ENCODE measurements at regions of chr2 and their contacts with region 1.

Region 1: GRCh38 chr2:168961450-168962229 is 60.5 kb downstream of the G6PC2 start:
- DNase-seq: no peak
- ATAC-seq: peak; percentile 73
- H3K4me3 Mint-ChIP-seq: no peak overlapping the region
- H3K27ac Mint-ChIP-seq: no peak overlapping the region
- H3K4me1 Mint-ChIP-seq: no peaks in the 10 kb centered on the region
- H3K27me3 Mint-ChIP-seq: no peaks in the 10 kb centered on the region
- CTCF ChIP-seq: no peak

Region 2: GRCh38 chr2:168671932-168672331 is 289.7 kb before region 1 on chr2:
- CTCF ChIA-PET with region 1: no interaction called
- POLR2A ChIA-PET with region 1: no interaction called
- intact Hi-C with region 1: no loop called
- DNase-seq: no peak
- ATAC-seq: no peak
- H3K4me3 Mint-ChIP-seq: no peak overlapping the region
- H3K27ac Mint-ChIP-seq: no peak overlapping the region
- H3K4me1 Mint-ChIP-seq: no peaks in the 10 kb centered on the region
- H3K27me3 Mint-ChIP-seq: no peaks in the 10 kb centered on the region
- CTCF ChIP-seq: no peak

Region 3: DNA sequence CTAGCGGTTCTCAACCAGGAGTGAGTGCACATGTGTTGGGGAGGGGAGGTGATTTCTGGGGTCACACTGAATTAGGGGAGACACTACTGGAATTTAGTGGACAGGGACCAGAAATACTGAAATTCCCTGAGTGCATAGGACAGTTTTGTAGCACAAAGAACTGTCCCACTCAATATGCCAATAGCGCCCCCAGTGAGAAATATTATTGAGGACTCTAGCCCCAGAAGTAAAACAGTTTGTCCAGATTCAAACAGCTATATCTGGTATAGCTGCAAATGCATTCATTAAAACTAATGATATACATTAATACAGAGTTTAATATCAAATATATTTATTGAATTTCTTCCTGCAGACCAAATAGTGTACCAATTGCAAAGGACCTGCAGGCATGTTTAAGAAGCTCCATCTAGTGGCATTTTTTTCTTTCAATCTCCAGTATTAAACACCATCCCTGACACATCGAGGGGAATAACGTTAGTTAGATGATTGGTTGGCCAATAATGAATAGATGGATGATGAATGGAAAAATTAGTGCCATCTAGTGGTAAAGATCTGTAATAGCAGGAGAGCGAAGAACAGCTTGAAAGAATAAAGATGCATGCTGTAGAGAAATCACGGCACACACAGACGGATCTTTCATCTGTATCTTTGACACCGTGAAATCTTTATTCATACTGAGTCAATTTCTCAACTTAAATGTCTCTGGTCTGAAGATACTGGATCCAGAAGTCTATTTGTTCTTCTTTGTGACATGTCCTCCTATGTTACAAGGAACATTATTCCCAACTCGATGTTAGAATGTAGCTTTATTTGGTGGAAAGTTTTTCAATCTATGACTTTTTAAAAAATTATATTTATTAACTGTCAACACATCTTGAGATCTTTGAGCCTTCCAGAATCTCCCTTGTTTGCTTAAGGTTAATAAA is 170.2 kb after region 1 on chr2:
- CTCF ChIA-PET with region 1: interaction called, 19 read pairs
- POLR2A ChIA-PET with region 1: no interaction called
- intact Hi-C with region 1: loop called (anchors 1 kb)
- DNase-seq: no peak
- ATAC-seq: peak; percentile 86
- H3K4me3 Mint-ChIP-seq: no peak overlapping the region
- H3K27ac Mint-ChIP-seq: no peak overlapping the region
- H3K4me1 Mint-ChIP-seq: no peaks in the 10 kb centered on the region
- H3K27me3 Mint-ChIP-seq: no peaks in the 10 kb centered on the region
- CTCF ChIP-seq: peak; percentile 52

Region 4: GRCh38 chr2:169141713-169142352 is 180.2 kb after region 1 on chr2:
- CTCF ChIA-PET with region 1: interaction called, 11 read pairs
- POLR2A ChIA-PET with region 1: no interaction called
- intact Hi-C with region 1: loop called (anchors 1 kb)
- DNase-seq: no peak
- ATAC-seq: peak; percentile 47
- H3K4me3 Mint-ChIP-seq: no peak overlapping the region
- H3K27ac Mint-ChIP-seq: no peak overlapping the region
- H3K4me1 Mint-ChIP-seq: peaks cover 3% of the 10 kb centered on the region
- H3K27me3 Mint-ChIP-seq: no peaks in the 10 kb centered on the region
- CTCF ChIP-seq: peak; percentile 54

Region 5: DNA sequence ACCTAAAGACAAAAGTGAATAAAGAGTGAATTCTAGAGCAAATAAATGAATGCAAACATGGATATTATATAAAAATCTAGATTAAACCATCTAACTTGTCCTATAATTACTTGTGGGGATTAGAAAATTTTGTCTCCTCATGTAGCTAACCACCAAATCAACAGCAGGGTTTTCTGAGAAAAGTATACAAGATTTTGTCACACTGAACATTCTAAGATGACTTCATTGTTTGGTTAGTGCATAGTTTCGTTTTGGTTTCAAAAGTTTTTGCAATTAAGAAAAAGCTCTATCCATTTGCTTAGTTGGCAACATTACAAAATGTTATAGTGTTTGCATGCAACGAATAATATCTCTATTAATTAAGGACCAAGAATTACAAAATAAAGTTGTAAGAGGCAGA is 275.6 kb after region 1 on chr2:
- CTCF ChIA-PET with region 1: no interaction called
- POLR2A ChIA-PET with region 1: no interaction called
- intact Hi-C with region 1: no loop called
- DNase-seq: no peak
- ATAC-seq: no peak
- H3K4me3 Mint-ChIP-seq: no peak overlapping the region
- H3K27ac Mint-ChIP-seq: no peak overlapping the region
- H3K4me1 Mint-ChIP-seq: no peaks in the 10 kb centered on the region
- H3K27me3 Mint-ChIP-seq: no peaks in the 10 kb centered on the region
- CTCF ChIP-seq: no peak

Region 6: DNA sequence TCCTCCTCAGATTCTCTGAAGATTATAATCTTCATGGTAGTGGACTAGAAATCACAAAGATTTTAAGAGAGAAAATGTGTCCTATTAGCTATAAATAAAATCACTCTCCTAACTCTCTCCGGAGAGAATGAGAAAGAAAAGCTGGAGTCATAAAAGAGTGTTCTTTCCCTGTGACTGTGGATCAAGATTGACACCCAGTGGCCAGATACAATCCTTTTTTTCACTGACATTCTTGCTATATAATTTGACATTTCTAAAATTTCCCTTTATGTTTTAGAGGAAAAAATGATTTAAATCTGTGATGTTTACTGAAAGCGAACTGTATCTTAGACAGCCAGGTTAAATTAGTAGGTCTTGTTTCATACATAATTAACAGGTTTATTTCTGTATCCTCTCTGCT is 436.1 kb after region 1 on chr2:
- CTCF ChIA-PET with region 1: no interaction called
- POLR2A ChIA-PET with region 1: no interaction called
- intact Hi-C with region 1: loop called (anchors 5 kb)
- DNase-seq: no peak
- ATAC-seq: no peak
- H3K4me3 Mint-ChIP-seq: no peak overlapping the region
- H3K27ac Mint-ChIP-seq: no peak overlapping the region
- H3K4me1 Mint-ChIP-seq: no peaks in the 10 kb centered on the region
- H3K27me3 Mint-ChIP-seq: peaks cover 10% of the 10 kb centered on the region
- CTCF ChIP-seq: no peak

Region 7: DNA sequence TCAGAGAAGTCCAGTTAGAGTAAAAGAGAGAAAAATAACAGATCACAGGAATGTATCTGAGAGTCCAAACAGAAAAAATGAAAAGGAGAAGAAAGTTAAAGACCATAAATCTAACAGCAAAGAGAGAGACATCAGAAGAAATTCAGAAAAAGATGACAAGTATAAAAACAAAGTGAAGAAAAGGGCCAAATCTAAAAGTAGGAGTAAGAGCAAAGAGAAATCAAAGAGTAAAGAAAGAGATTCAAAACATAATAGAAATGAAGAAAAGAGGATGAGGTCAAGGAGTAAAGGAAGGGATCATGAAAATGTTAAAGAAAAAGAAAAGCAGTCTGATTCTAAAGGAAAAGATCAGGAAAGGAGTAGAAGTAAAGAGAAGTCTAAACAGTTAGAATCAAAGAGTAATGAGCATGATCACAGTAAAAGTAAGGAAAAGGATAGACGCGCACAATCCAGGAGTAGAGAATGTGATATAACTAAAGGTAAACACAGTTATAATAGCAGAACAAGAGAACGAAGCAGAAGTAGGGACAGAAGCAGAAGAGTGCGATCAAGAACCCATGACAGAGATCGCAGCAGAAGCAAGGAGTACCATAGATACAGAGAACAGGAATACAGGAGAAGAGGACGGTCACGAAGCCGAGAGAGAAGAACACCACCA is 674.9 kb after region 1 on chr2:
- CTCF ChIA-PET with region 1: no interaction called
- POLR2A ChIA-PET with region 1: no interaction called
- intact Hi-C with region 1: no loop called
- DNase-seq: no peak
- ATAC-seq: no peak
- H3K4me3 Mint-ChIP-seq: no peak overlapping the region
- H3K27ac Mint-ChIP-seq: no peak overlapping the region
- H3K4me1 Mint-ChIP-seq: no peaks in the 10 kb centered on the region
- H3K27me3 Mint-ChIP-seq: no peaks in the 10 kb centered on the region
- CTCF ChIP-seq: no peak

Region 8: DNA sequence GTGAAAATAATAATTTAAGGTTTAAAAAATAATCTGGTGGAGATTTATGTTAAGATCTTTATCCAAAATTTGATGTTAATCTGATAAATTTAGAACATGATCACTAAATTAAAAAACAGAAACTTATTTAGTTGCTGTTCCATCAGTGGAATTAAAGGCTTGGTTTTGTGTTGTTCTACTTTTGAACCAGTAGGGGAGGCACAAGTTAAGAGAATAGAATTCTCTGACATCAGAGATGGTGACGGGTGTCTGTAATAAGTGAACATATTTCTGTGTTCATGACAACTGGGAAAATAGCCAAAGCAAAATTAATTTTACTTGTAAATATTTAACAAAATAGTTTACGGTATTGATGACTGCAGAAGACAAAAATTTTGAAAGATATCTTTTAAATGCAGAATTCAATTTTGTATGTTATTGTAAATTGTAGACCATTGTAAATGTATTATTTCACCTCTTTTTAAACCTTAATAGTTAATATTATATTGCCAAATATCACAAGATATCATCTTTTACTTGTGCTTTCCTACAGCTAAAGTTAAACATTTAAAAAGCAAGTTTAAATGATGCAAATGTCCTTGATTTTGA is 971.6 kb after region 1 on chr2:
- CTCF ChIA-PET with region 1: no interaction called
- POLR2A ChIA-PET with region 1: no interaction called
- intact Hi-C with region 1: loop called (anchors 1 kb)
- DNase-seq: no peak
- ATAC-seq: peak; percentile 52
- H3K4me3 Mint-ChIP-seq: no peak overlapping the region
- H3K27ac Mint-ChIP-seq: no peak overlapping the region
- H3K4me1 Mint-ChIP-seq: no peaks in the 10 kb centered on the region
- H3K27me3 Mint-ChIP-seq: no peaks in the 10 kb centered on the region
- CTCF ChIP-seq: no peak